Activated CD8-positive, alpha-beta T cell treated with anti-CD3 and anti-CD28 coated beads for 36 hours (primary cell): ENCODE measurements at regions of chr3 and their contacts with region 1.

Region 1: GRCh38 chr3:194333212-194333980 is 17.7 kb downstream of the CPN2 start:
- DNase-seq: peak; percentile 89
- ATAC-seq: peak; percentile 98
- H3K4me3 Mint-ChIP-seq: peak overlapping the region; percentile 72
- H3K27ac Mint-ChIP-seq: no peak overlapping the region
- H3K4me1 Mint-ChIP-seq: no peaks in the 10 kb centered on the region
- H3K27me3 Mint-ChIP-seq: peaks cover 21% of the 10 kb centered on the region
- CTCF ChIP-seq: peak; percentile 99

Region 2: GRCh38 chr3:194269610-194270145 is 63.7 kb before region 1 on chr3:
- CTCF ChIA-PET with region 1: no interaction called
- POLR2A ChIA-PET with region 1: no interaction called
- intact Hi-C with region 1: no loop called
- DNase-seq: no peak
- ATAC-seq: no peak
- H3K4me3 Mint-ChIP-seq: no peak overlapping the region
- H3K27ac Mint-ChIP-seq: no peak overlapping the region
- H3K4me1 Mint-ChIP-seq: peaks cover 2% of the 10 kb centered on the region
- H3K27me3 Mint-ChIP-seq: peaks cover 6% of the 10 kb centered on the region
- CTCF ChIP-seq: no peak

Region 3: DNA sequence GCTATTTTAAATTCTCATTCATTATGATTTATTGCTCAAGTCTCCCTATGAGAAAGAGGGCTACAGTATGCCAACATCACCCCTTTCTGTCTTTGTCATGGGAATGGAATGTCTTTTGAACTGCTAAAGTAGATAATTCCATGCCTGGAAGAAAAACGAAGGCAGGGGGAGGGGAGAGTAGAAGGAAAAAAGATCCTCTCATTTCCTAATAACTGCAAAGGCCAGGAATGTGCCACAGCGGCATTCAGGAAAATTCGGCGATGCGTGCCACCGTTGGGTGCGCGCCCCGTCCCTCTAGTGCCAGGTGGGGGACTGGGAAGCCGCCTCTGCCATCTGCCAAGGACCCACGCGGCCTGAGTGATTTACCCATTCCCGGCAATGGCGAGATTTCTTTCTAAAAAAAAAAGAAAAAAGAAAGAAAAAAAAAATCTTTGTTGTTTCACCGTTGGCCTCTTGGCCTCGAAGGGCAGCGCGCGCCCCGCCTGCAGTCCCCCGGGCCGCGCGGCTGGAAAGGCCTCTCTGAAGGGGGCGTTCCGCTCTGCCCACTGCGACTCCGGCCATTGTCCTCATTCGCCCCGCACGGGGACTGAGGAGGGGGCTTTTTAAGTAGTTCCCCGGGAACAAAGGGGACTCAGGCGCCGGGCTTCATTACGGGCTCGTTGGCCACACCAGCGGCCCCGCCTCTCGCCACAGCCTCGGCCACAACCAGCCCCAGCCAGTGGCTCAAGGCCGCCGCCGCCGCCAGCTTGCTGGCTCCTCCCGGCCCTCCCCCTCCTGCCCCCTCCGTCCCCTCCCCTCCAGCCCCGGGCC is 36.7 kb before region 1 on chr3:
- CTCF ChIA-PET with region 1: no interaction called
- POLR2A ChIA-PET with region 1: no interaction called
- intact Hi-C with region 1: no loop called
- DNase-seq: no peak
- ATAC-seq: no peak
- H3K4me3 Mint-ChIP-seq: no peak overlapping the region
- H3K27ac Mint-ChIP-seq: no peak overlapping the region
- H3K4me1 Mint-ChIP-seq: peaks cover 5% of the 10 kb centered on the region
- H3K27me3 Mint-ChIP-seq: peaks cover 10% of the 10 kb centered on the region
- CTCF ChIP-seq: no peak

Region 4: DNA sequence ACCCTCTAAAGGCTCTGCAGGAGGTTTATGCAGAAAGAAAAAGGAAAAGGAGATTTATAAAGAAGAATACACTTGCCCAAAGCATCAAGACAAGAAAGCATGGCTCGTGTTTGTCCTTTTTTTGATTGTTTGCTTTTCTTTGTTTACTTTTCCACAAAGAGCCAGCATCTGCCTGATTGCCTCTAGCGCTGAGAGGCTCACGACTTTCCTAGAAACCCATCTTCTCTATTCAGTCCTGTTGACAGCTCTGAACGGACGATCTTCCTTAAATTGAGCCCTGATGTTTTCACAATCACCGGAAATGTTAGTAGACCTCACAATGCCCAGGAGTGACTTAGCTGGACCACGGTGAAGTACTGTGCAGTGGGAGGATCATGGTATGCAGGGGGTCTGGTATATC is 53.2 kb after region 1 on chr3:
- CTCF ChIA-PET with region 1: interaction called, 11 read pairs
- POLR2A ChIA-PET with region 1: no interaction called
- intact Hi-C with region 1: no loop called
- DNase-seq: no peak
- ATAC-seq: no peak
- H3K4me3 Mint-ChIP-seq: no peak overlapping the region
- H3K27ac Mint-ChIP-seq: no peak overlapping the region
- H3K4me1 Mint-ChIP-seq: no peaks in the 10 kb centered on the region
- H3K27me3 Mint-ChIP-seq: peaks cover 2% of the 10 kb centered on the region
- CTCF ChIP-seq: no peak

Region 5: GRCh38 chr3:194395778-194396547 is 62.6 kb after region 1 on chr3:
- CTCF ChIA-PET with region 1: interaction called, 188 read pairs
- POLR2A ChIA-PET with region 1: interaction called, 7 read pairs
- intact Hi-C with region 1: no loop called
- DNase-seq: peak; percentile 85
- ATAC-seq: peak; percentile 79
- H3K4me3 Mint-ChIP-seq: peak overlapping the region; percentile 61
- H3K27ac Mint-ChIP-seq: peak overlapping the region; percentile 72
- H3K4me1 Mint-ChIP-seq: peaks cover 55% of the 10 kb centered on the region
- H3K27me3 Mint-ChIP-seq: peaks cover 18% of the 10 kb centered on the region
- CTCF ChIP-seq: no peak

Region 6: GRCh38 chr3:194404365-194405140 is 71.2 kb after region 1 on chr3:
- CTCF ChIA-PET with region 1: interaction called, 188 read pairs
- POLR2A ChIA-PET with region 1: interaction called, 3 read pairs
- intact Hi-C with region 1: loop called (anchors 2 kb)
- DNase-seq: peak; percentile 60
- ATAC-seq: no peak
- H3K4me3 Mint-ChIP-seq: no peak overlapping the region
- H3K27ac Mint-ChIP-seq: peak overlapping the region; percentile 25
- H3K4me1 Mint-ChIP-seq: peaks cover 10% of the 10 kb centered on the region
- H3K27me3 Mint-ChIP-seq: no peaks in the 10 kb centered on the region
- CTCF ChIP-seq: peak; percentile 91

Region 7: GRCh38 chr3:194592798-194593752 is 259.7 kb after region 1 on chr3:
- CTCF ChIA-PET with region 1: interaction called, 11 read pairs
- POLR2A ChIA-PET with region 1: no interaction called
- intact Hi-C with region 1: no loop called
- DNase-seq: no peak
- ATAC-seq: no peak
- H3K4me3 Mint-ChIP-seq: no peak overlapping the region
- H3K27ac Mint-ChIP-seq: no peak overlapping the region
- H3K4me1 Mint-ChIP-seq: peaks cover 3% of the 10 kb centered on the region
- H3K27me3 Mint-ChIP-seq: no peaks in the 10 kb centered on the region
- CTCF ChIP-seq: no peak